ENCODE measurements at regions of chr5 and their contacts with region 1.

Region 1: GRCh38 chr5:8949908-8950307 is 596.0 kb downstream of the SEMA5A start:
- DNase-seq: peak; percentile 71
- ATAC-seq: peak; percentile 97
- H3K4me3 ChIP-seq: no peak overlapping the region
- H3K27ac ChIP-seq: peak overlapping the region; percentile 25; the same call in 1 of the 2 replicates
- H3K4me1 ChIP-seq: no peaks in the 10 kb centered on the region
- H3K27me3 ChIP-seq: no peaks in the 10 kb centered on the region
- CTCF ChIP-seq: no peak
- EP300 ChIP-seq: peak; percentile 43 to 66; a peak in 2 of 4 replicates
- POLR2A ChIP-seq: no peak
- RAD21 ChIP-seq: no peak

Region 2: DNA sequence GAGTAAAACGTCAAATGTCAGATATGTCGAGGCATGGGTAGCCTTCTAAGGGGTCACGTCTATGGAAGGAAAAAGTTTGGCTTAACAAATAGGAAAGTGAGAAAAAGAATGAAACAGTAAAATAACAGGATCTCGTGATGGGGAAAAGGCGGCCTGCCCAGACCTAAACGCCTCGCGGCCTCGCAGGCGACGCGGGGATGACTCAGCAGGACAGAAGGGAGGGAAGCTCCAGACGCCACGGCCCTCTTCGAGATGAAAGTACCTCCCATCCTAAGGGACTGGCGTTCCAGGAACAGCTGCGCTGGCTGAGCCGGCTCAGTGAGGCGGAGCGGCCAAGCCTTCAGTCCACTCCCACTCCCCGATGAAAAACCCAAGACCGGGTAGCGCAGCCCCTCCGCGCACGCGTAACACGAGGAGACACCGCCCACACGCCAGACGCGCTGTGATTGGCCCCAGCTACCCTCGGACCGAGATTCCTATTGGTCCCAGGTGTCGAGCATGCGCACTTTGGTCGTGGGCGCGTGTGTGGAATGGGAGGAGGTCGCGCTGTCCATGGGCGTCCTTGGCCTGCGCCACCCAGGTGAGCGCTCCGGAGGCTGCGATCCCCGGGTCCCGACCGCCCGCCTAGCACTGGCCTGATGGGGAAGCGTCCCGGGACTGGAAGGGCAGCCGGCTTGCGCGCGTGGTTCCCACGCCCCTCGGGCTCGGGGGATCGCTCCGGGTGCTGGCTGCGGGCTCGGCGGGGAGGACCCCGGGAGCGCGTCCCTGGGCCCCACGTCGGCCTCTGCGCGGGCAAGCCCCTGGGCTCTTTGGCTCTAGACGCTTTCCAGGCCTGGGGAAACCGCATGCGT is 492.5 kb before region 1 on chr5:
- CTCF ChIA-PET with region 1: no interaction called
- POLR2A ChIA-PET with region 1: no interaction called
- RAD21 ChIA-PET with region 1: no interaction called
- SMC1A ChIA-PET with region 1: no interaction called
- in situ Hi-C with region 1: no loop called
- intact Hi-C with region 1: no loop called
- DNase-seq: peak; percentile 27
- ATAC-seq: no peak
- H3K4me3 ChIP-seq: peak overlapping the region; percentile 43
- H3K27ac ChIP-seq: peak overlapping the region; percentile 37
- H3K4me1 ChIP-seq: no peaks in the 10 kb centered on the region
- H3K27me3 ChIP-seq: no peaks in the 10 kb centered on the region
- CTCF ChIP-seq: no peak
- EP300 ChIP-seq: no peak
- POLR2A ChIP-seq: peak; percentile 79
- RAD21 ChIP-seq: no peak

Region 3: DNA sequence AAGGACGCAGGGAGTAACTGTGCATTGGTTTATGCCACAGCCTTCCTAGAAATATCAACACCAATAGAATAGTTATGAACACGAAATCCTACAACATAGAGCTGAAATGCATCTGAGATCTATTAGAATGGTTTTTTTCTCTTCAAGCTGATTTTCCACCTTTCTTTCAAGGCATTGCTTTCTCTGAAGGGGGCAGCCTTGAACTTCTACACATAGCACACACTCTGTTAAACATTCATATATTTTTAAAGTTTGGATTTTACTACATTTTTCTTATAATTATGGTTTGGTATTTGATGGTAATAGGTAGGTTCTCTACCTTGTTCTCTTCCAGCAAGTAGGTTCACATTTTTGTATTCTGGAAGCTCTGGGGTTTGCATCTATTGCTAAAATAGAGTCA is 65.9 kb before region 1 on chr5:
- CTCF ChIA-PET with region 1: interaction called, 3 read pairs
- POLR2A ChIA-PET with region 1: no interaction called
- RAD21 ChIA-PET with region 1: interaction called, 10 read pairs
- SMC1A ChIA-PET with region 1: interaction called, 3 read pairs
- in situ Hi-C with region 1: no loop called
- intact Hi-C with region 1: no loop called
- DNase-seq: no peak
- ATAC-seq: no peak
- H3K4me3 ChIP-seq: no peak overlapping the region
- H3K27ac ChIP-seq: no peak overlapping the region
- H3K4me1 ChIP-seq: no peaks in the 10 kb centered on the region
- H3K27me3 ChIP-seq: no peaks in the 10 kb centered on the region
- CTCF ChIP-seq: no peak
- EP300 ChIP-seq: no peak
- POLR2A ChIP-seq: no peak
- RAD21 ChIP-seq: no peak

Region 4: GRCh38 chr5:9059920-9060691 is 110.2 kb after region 1 on chr5:
- CTCF ChIA-PET with region 1: interaction called, 5 read pairs
- POLR2A ChIA-PET with region 1: interaction called, 5 read pairs
- RAD21 ChIA-PET with region 1: interaction called, 4 read pairs
- SMC1A ChIA-PET with region 1: interaction called, 8 read pairs
- in situ Hi-C with region 1: no loop called
- intact Hi-C with region 1: loop called (anchors 5 kb)
- DNase-seq: no peak
- ATAC-seq: peak; percentile 39; the same call in 2 of the 3 replicates
- H3K4me3 ChIP-seq: no peak overlapping the region
- H3K27ac ChIP-seq: no peak overlapping the region
- H3K4me1 ChIP-seq: peaks cover 7% of the 10 kb centered on the region
- H3K27me3 ChIP-seq: no peaks in the 10 kb centered on the region
- CTCF ChIP-seq: no peak
- EP300 ChIP-seq: no peak
- POLR2A ChIP-seq: no peak
- RAD21 ChIP-seq: no peak

Measured in GM12878 (cell line).